ENCODE measurements at regions of chr11 and their contacts with region 1.

Region 1: GRCh38 chr11:2975594-2975993 is 16.5 kb downstream of the NAP1L4 start:
- DNase-seq: no peak

Region 2: GRCh38 chr11:3020011-3020410 is 44.4 kb after region 1 on chr11:
- intact Hi-C with region 1: loop called (anchors 1 kb)
- DNase-seq: no peak

Region 3: GRCh38 chr11:3091791-3092602 is 116.4 kb after region 1 on chr11:
- intact Hi-C with region 1: loop called (anchors 10 kb)
- DNase-seq: peak; percentile 88